Activated T-helper 1 cell treated with anti-CD3 and anti-CD28 coated beads, Interleukin-12 subunit alpha, Interleukin-12 subunit beta, Interleukin-2, Interleukin-4 antibody, amounts not matched to agents 30 ng/mL and 10 ng/mL and 1 ng/mL, durations not matched to agents 14 hours and 24 hours and 36 hours (primary cell): ENCODE measurements at regions of chr1 and their contacts with region 1.

Region 1: GRCh38 chr1:43946236-43947060 is at the start of gene IPO13:
- DNase-seq: peak; percentile 96
- H3K4me3 Mint-ChIP-seq: peak within 1 kb of the TSS; percentile 97
- H3K27ac Mint-ChIP-seq: peak within 1 kb of the TSS; percentile 96
- H3K4me1 Mint-ChIP-seq: peaks cover 53% of the 10 kb centered on the region
- H3K27me3 Mint-ChIP-seq: no peaks in the 10 kb centered on the region
- total RNA-seq, gene IPO13: 28.6 and 33.9 TPM in 2 replicates

Region 2: DNA sequence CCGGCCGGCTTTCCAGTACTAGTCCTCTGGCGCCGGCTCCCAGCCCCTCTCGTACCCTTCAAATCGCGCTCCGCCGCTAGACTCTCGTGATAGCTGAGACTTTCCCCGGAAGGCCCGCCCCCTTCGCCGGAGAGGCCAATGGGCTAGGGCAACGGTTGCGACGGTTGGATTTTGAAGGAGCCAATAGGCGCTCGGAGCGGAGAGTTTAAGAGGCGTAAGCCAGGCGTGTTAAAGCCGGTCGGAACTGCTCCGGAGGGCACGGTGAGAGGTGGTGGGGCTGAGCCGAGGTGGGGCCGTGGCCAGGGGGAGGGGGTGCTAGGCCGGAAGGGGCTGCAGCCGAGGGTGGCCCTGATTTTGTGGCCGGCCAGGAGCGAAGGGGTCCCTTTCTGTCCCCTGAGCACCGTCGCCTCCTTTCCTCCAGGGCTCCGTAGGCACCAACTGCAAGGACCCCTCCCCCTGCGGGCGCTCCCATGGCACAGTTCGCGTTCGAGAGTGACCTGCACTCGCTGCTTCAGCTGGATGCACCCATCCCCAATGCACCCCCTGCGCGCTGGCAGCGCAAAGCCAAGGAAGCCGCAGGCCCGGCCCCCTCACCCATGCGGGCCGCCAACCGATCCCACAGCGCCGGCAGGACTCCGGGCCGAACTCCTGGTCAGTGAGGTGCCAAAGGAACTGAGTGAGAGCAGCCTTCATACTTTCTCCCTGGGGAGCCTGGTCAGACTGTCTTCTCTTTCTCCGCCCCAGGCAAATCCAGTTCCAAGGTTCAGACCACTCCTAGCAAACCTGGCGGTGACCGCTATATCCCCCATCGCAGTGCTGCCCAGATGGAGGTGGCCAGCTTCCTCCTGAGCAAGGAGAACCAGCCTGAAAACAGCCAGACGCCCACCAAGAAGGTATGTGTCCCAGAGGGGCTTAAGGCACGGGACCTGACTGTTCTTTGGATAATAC is 587.4 kb before region 1 on chr1 and contains the start of gene CDC20:
- intact Hi-C with region 1: loop called (anchors 1 kb)
- DNase-seq: peak; percentile 99
- H3K4me3 Mint-ChIP-seq: peak within 1 kb of the TSS; percentile 96
- H3K27ac Mint-ChIP-seq: peak within 1 kb of the TSS; percentile 92
- H3K4me1 Mint-ChIP-seq: peaks cover 50% of the 10 kb centered on the region
- H3K27me3 Mint-ChIP-seq: no peaks in the 10 kb centered on the region
- total RNA-seq, gene CDC20: 82.9 and 91.8 TPM in 2 replicates

Region 3: GRCh38 chr1:43650310-43651085 is 295.9 kb before region 1 on chr1:
- intact Hi-C with region 1: loop called (anchors 1 kb)
- DNase-seq: peak; percentile 89
- H3K4me3 Mint-ChIP-seq: peak overlapping the region; percentile 98
- H3K27ac Mint-ChIP-seq: peak overlapping the region; percentile 98
- H3K4me1 Mint-ChIP-seq: peaks cover 27% of the 10 kb centered on the region
- H3K27me3 Mint-ChIP-seq: peaks cover under 1% of the 10 kb centered on the region

Region 4: GRCh38 chr1:43893006-43893405 is 53.4 kb before region 1 on chr1:
- intact Hi-C with region 1: no loop called
- DNase-seq: no peak
- H3K4me3 Mint-ChIP-seq: no peak overlapping the region
- H3K27ac Mint-ChIP-seq: no peak overlapping the region
- H3K4me1 Mint-ChIP-seq: no peaks in the 10 kb centered on the region
- H3K27me3 Mint-ChIP-seq: no peaks in the 10 kb centered on the region

Region 5: DNA sequence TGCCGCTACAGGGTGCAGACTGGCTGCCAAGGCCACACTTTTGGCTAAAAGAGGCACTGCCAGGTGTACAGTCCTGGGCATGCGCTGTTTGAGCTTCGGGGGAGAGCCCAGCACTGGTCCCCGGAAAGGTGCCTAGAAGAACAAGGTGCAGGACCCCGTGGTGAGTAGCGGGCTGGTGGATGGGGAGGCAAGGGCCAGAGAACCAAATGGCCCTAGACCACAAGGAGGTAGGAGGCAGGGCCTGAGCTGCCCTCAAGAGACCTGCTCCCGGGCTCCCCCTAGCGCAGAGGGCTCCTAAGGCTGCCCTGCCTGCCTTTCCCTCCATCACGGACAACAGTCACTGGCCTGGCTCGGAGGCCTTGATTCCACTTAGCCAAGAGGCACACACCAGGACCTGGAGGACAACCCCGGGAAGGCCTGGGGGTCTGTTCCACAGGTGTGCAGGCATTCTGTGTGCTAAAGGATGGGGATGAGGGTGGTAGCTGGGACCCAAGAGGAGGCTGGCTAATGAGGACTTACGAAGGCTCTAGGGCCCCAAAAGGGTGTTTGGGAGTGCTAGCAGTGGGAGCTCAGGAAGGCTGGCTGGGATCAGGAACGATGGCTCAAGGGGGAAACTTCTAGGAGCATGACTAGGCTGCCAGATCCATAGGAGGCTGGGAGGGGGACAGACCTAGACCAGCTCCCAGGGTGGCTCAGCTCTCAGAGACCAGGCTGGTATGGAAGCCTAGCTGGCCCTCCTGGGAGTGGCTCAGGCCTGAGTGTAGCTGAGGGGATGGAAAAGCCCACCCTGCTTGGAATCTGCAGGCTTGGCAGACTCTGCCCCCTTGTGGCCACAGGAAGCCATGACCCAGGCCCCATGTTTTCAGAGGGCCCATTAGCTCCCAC is 12.1 kb before region 1 on chr1:
- intact Hi-C with region 1: loop called (anchors 1 kb)
- DNase-seq: peak; percentile 32
- H3K4me3 Mint-ChIP-seq: no peak overlapping the region
- H3K27ac Mint-ChIP-seq: no peak overlapping the region
- H3K4me1 Mint-ChIP-seq: peaks cover 8% of the 10 kb centered on the region
- H3K27me3 Mint-ChIP-seq: peaks cover 14% of the 10 kb centered on the region

Region 6: GRCh38 chr1:43991476-43992231 is 45.2 kb after region 1 on chr1 and contains the start of gene CCDC24:
- intact Hi-C with region 1: loop called (anchors 1 kb)
- DNase-seq: peak; percentile 74
- H3K4me3 Mint-ChIP-seq: peak within 1 kb of the TSS; percentile 91
- H3K27ac Mint-ChIP-seq: peak within 1 kb of the TSS; percentile 82
- H3K4me1 Mint-ChIP-seq: peaks cover 13% of the 10 kb centered on the region
- H3K27me3 Mint-ChIP-seq: no peaks in the 10 kb centered on the region
- total RNA-seq, gene CCDC24: 2.7 TPM in 2 replicates

Region 7: DNA sequence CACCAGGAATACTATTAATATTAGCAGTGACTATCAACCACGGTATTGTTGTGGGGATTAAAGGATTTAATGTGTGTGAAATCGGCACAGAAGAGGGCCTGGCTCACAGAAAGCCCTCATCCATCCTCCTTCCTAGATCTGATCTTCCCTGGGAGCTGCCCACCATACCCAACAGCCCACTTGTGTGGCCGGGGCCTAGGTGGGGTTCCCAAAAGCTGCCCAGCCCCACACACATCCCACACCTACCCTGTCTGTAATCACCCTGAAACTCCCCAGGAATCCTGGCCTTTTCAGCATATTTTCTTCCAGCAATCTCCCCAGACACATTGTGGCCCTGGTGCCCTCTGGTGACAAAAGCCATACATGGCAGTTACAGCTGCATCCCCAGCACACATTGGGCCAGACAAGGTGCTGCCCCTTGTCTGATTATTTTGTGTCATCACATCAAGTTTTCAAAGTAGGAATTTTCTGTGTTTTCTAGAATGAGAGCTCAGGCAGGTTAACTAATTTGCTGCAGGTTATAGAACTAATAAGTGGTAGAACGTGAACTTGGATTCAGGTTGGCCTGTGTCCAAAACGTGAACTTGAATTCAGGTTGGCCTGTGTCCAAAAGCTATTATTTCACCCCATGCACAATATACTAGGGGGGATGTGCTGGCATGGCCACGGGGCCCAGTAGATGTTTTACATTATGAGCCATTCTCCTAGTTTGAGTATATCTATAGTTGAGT is 90.1 kb after region 1 on chr1:
- intact Hi-C with region 1: loop called (anchors 1 kb)
- DNase-seq: peak; percentile 55
- H3K4me3 Mint-ChIP-seq: no peak overlapping the region
- H3K27ac Mint-ChIP-seq: no peak overlapping the region
- H3K4me1 Mint-ChIP-seq: peaks cover 14% of the 10 kb centered on the region
- H3K27me3 Mint-ChIP-seq: peaks cover 10% of the 10 kb centered on the region